PC-3 (cell line): ENCODE measurements at regions of chr3 and their contacts with region 1.

Region 1: DNA sequence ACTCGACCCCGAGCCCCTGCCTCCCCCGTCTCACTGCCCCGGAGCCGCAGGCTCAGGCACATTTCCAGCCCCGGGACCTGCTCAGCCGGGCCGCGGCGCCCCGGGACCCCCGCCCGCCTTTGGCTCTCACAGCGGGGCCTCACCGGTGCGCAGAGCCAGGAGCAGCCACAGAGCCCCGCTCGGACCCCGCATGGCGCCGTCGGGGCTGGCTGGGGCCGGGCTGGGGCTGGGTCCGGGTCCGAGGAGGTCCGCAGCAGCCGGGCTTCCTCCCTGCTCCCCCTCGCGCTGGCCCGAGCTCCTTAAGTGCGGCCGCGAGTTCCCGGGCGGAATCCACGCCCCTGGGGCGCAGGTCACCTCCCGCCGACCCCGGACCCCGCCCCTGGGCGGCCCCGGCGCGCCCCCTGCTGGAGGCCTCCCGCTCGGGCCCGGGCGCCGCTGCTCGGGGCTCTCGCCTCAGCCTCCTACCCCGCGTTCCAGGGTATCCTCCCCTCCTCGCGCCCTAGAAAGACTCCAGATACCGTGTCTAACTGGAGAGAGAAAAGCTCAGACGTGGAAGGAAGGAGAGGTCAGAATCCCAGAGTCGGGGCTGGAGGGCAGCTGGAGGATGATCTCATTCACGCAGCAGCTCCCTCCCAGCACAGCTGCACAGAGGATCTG is at the start of gene MELTF:
- DNase-seq: peak; percentile 75
- ATAC-seq: peak; percentile 52
- H3K4me3 ChIP-seq: peak within 1 kb of the TSS; percentile 87
- H3K27ac ChIP-seq: peak within 1 kb of the TSS; percentile 85
- H3K4me1 ChIP-seq: peaks cover 41% of the 10 kb centered on the region
- H3K27me3 ChIP-seq: no peaks in the 10 kb centered on the region
- CTCF ChIP-seq: peak; percentile 83
- total RNA-seq, gene MELTF: 40.6 and 46.8 TPM in 2 replicates

Region 2: DNA sequence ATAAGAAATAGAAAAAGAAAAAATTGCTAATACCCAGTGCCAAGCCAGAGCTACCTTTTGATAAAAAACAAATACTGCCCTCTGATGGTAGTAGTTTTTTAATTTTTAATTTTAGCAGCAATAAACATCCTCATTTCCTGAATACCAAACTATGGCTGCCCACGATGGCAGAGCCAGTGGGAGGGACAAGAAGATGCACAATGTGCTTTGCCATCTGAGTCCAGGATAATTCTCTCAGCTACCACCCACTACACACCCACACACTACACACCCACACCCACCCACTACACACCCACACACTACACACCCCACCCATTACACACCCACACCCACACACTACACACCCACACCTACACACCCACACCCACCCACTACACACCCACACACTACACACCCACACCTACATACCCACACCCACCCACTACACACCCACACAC is 335.4 kb before region 1 on chr3:
- CTCF ChIA-PET with region 1: no interaction called
- POLR2A ChIA-PET with region 1: no interaction called
- intact Hi-C with region 1: no loop called
- DNase-seq: peak; percentile 50
- ATAC-seq: peak; percentile 51
- H3K4me3 ChIP-seq: no peak overlapping the region
- H3K27ac ChIP-seq: no peak overlapping the region
- H3K4me1 ChIP-seq: no peaks in the 10 kb centered on the region
- H3K27me3 ChIP-seq: no peaks in the 10 kb centered on the region
- CTCF ChIP-seq: peak; percentile 29; the same call in 1 of the 2 replicates

Region 3: DNA sequence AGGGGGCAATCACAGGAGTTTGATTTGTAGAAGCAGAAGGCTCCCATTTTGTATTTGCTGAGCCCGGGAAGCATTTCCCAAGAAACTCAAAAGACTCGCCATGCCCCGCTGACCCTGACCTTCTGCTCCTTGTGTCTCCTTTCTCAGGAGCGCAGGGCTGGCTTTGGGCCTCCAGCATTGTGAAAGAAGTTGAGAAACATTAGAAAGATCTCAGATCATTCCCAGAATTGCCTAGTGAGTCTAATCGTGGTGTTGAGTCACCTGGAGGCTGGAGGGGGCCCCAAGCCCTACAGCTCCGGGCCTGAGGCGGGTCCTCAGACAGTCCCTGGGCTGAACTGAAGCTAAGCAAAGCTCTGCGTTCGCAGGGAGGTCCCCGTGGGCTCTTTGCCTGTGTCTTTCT is 50.1 kb before region 1 on chr3:
- CTCF ChIA-PET with region 1: interaction called, 6 read pairs
- POLR2A ChIA-PET with region 1: no interaction called
- intact Hi-C with region 1: loop called (anchors 2 kb)
- DNase-seq: no peak
- ATAC-seq: no peak
- H3K4me3 ChIP-seq: no peak overlapping the region
- H3K27ac ChIP-seq: no peak overlapping the region
- H3K4me1 ChIP-seq: no peaks in the 10 kb centered on the region
- H3K27me3 ChIP-seq: no peaks in the 10 kb centered on the region
- CTCF ChIP-seq: no peak

Region 4: DNA sequence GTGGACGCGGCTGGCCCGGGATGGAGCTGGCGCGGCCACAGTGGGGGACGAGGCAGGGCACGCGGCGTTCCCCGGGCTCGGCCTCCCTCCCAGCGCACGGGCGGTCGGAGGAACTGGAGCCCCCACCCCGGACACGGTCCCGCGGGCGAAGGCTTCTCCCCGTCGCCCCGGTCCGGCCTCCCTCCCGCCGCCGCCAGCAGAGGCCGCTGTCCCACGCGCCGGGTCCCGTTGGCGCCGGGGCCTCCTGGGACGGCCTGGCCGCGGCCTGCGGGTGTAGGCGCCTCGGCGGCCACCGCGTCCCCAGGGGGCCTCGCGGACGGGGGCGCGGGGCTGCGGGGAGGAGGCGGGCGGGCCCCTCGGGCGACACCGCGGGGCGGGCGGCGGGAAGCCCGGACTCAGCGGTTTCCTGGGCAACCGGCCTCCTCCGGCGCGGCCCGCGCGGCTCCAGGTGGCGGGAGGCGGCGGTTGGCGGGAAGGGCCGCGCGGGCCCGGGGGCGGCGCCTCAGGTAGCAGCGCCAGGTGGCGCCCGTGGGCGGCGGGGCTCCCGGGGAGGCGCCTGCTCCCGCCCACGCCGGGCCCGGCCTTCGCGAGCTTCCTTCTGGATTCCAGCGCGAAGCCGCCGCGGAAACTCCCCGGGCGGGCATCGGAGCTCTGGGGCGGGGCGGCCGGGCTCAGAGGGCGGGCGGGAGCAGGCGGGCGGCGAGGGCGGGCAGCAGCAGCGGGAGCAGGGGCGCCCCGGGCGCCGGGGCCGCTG is 26.8 kb before region 1 on chr3:
- CTCF ChIA-PET with region 1: interaction called, 6 read pairs
- POLR2A ChIA-PET with region 1: interaction called, 9 read pairs
- intact Hi-C with region 1: loop called (anchors 1 kb)
- DNase-seq: peak; percentile 88
- ATAC-seq: peak; percentile 78
- H3K4me3 ChIP-seq: peak overlapping the region; percentile 83
- H3K27ac ChIP-seq: no peak overlapping the region
- H3K4me1 ChIP-seq: peaks cover 12% of the 10 kb centered on the region
- H3K27me3 ChIP-seq: no peaks in the 10 kb centered on the region
- CTCF ChIP-seq: peak; percentile 56